ENCODE measurements at regions of chr9 and their contacts with region 1.

Region 1: GRCh38 chr9:94945197-94946144 is 219.0 kb downstream of the AOPEP start:
- DNase-seq: peak; percentile 82
- H3K4me3 ChIP-seq: no peak overlapping the region
- H3K27ac ChIP-seq: peak overlapping the region; percentile 55
- H3K4me1 ChIP-seq: peaks cover 36% of the 10 kb centered on the region
- H3K27me3 ChIP-seq: no peaks in the 10 kb centered on the region
- CTCF ChIP-seq: no peak

Region 2: GRCh38 chr9:94692601-94693000 is 252.9 kb before region 1 on chr9:
- CTCF ChIA-PET with region 1: no interaction called
- dilution Hi-C with region 1: no loop called
- in situ Hi-C with region 1: no loop called
- intact Hi-C with region 1: no loop called
- DNase-seq: no peak
- H3K4me3 ChIP-seq: no peak overlapping the region
- H3K27ac ChIP-seq: no peak overlapping the region
- H3K4me1 ChIP-seq: peaks cover under 1% of the 10 kb centered on the region
- H3K27me3 ChIP-seq: no peaks in the 10 kb centered on the region
- CTCF ChIP-seq: no peak

Region 3: DNA sequence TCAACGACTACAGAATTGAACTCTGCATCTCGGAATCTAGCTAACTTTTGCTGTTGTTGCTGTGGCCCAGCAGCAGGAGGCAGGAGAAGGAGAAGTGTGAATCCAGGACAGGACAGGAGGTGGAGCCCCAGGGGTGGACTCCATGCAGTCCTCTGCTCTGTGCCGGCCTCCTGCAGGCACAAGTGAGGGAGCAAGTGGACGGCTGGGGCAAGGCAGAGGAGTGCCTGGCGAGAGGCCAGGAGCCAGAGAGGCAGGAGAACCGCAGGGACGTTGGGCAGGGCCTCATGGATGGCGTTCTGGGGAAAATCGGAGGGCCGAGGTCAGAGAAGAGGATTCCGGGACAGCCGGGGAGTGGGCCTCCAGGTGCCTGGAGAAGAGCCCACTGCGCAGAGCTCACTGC is 157.9 kb after region 1 on chr9:
- CTCF ChIA-PET with region 1: no interaction called
- dilution Hi-C with region 1: no loop called
- in situ Hi-C with region 1: no loop called
- intact Hi-C with region 1: loop called (anchors 10 kb)
- DNase-seq: no peak
- H3K4me3 ChIP-seq: no peak overlapping the region
- H3K27ac ChIP-seq: no peak overlapping the region
- H3K4me1 ChIP-seq: peaks cover 63% of the 10 kb centered on the region
- H3K27me3 ChIP-seq: no peaks in the 10 kb centered on the region
- CTCF ChIP-seq: peak in 1 of 2 donors; percentile 2